B cell (primary cell): ENCODE measurements at regions of chr6 and their contacts with region 1.

Region 1: GRCh38 chr6:30857107-30857506 is 27.2 kb upstream of the DDR1 start:
- DNase-seq: no peak
- ATAC-seq: no peak
- H3K4me3 ChIP-seq: no peak overlapping the region
- H3K4me3 Mint-ChIP-seq: no peak overlapping the region
- H3K27ac ChIP-seq: no peak overlapping the region
- H3K27ac Mint-ChIP-seq: no peak overlapping the region
- H3K4me1 ChIP-seq: no peaks in the 10 kb centered on the region
- H3K4me1 Mint-ChIP-seq: peaks cover 9% of the 10 kb centered on the region
- H3K27me3 ChIP-seq: peaks cover 0 to 8% (median 0%) of the 10 kb centered on the region in 4 experiments
- H3K27me3 Mint-ChIP-seq: peaks cover 30% of the 10 kb centered on the region
- CTCF ChIP-seq: no peak

Region 2: GRCh38 chr6:30686908-30687658 is 170.0 kb before region 1 on chr6:
- CTCF ChIA-PET with region 1: no interaction called
- POLR2A ChIA-PET with region 1: interaction called, 10 read pairs
- intact Hi-C with region 1: no loop called
- DNase-seq: peak; percentile 90
- ATAC-seq: peak; percentile 55
- H3K4me3 ChIP-seq: peak overlapping the region; percentile 40 to 100 (median 93)
- H3K4me3 Mint-ChIP-seq: peak overlapping the region; percentile 97
- H3K27ac ChIP-seq: peak overlapping the region; percentile 93 to 97
- H3K27ac Mint-ChIP-seq: peak overlapping the region; percentile 99
- H3K4me1 ChIP-seq: peaks cover 39 to 46% of the 10 kb centered on the region in 2 donors
- H3K4me1 Mint-ChIP-seq: peaks cover 71% of the 10 kb centered on the region
- H3K27me3 ChIP-seq: no peaks in the 10 kb centered on the region
- H3K27me3 Mint-ChIP-seq: no peaks in the 10 kb centered on the region
- CTCF ChIP-seq: no peak

Region 3: DNA sequence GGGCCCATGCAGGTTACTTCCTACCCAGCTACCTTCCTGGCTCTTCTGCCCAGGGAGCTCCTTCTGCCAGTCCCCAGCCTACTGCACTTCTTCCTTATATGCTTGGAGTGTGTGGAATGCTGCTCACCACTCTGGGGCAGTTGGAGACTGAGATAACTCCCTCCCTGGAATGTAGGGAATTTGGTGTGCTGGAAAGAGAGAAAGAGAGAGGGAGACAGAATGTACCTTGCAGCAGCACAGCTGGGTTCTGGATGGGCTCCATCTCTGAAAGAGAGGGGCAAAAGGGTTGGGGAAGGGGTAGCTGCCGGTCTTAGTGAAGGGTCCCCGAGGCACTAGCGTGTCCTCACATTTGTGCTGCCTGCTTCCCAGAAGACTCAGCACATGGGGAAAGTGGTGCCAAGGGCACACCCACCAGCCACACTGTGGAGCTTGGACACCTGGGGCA is 13.0 kb before region 1 on chr6:
- CTCF ChIA-PET with region 1: no interaction called
- POLR2A ChIA-PET with region 1: no interaction called
- intact Hi-C with region 1: no loop called
- DNase-seq: no peak
- ATAC-seq: no peak
- H3K4me3 ChIP-seq: no peak overlapping the region
- H3K4me3 Mint-ChIP-seq: no peak overlapping the region
- H3K27ac ChIP-seq: no peak overlapping the region
- H3K27ac Mint-ChIP-seq: no peak overlapping the region
- H3K4me1 ChIP-seq: no peaks in the 10 kb centered on the region
- H3K4me1 Mint-ChIP-seq: no peaks in the 10 kb centered on the region
- H3K27me3 ChIP-seq: peaks cover 0 to 4% (median 0%) of the 10 kb centered on the region in 4 experiments
- H3K27me3 Mint-ChIP-seq: peaks cover 30% of the 10 kb centered on the region
- CTCF ChIP-seq: no peak